Calu3 (cell line): ENCODE measurements at regions of chr12 and their contacts with region 1.

Region 1: GRCh38 chr12:9039397-9039977 is 50.1 kb downstream of the KLRG1 start:
- DNase-seq: peak; percentile 13
- H3K4me3 Mint-ChIP-seq: no peak overlapping the region
- H3K27ac Mint-ChIP-seq: no peak overlapping the region
- H3K4me1 Mint-ChIP-seq: no peaks in the 10 kb centered on the region
- H3K27me3 Mint-ChIP-seq: peaks cover 33% of the 10 kb centered on the region
- CTCF ChIP-seq: peak; percentile 25

Region 2: GRCh38 chr12:8949342-8950220 is 89.9 kb before region 1 on chr12 and contains the start of gene M6PR:
- CTCF ChIA-PET with region 1: interaction called, 7 read pairs
- intact Hi-C with region 1: loop called (anchors 5 kb)
- DNase-seq: peak; percentile 93
- H3K4me3 Mint-ChIP-seq: peak within 1 kb of the TSS; percentile 87
- H3K27ac Mint-ChIP-seq: peak within 1 kb of the TSS; percentile 87
- H3K4me1 Mint-ChIP-seq: peaks cover 20% of the 10 kb centered on the region
- H3K27me3 Mint-ChIP-seq: no peaks in the 10 kb centered on the region
- CTCF ChIP-seq: peak; percentile 11
- total RNA-seq, gene M6PR: 241 and 256 TPM in 2 replicates

Region 3: GRCh38 chr12:9001233-9001632 is 38.3 kb before region 1 on chr12:
- CTCF ChIA-PET with region 1: no interaction called
- intact Hi-C with region 1: no loop called
- DNase-seq: no peak
- H3K4me3 Mint-ChIP-seq: no peak overlapping the region
- H3K27ac Mint-ChIP-seq: no peak overlapping the region
- H3K4me1 Mint-ChIP-seq: no peaks in the 10 kb centered on the region
- H3K27me3 Mint-ChIP-seq: no peaks in the 10 kb centered on the region
- CTCF ChIP-seq: no peak

Region 4: GRCh38 chr12:9079883-9080675 is 40.6 kb after region 1 on chr12:
- CTCF ChIA-PET with region 1: no interaction called
- intact Hi-C with region 1: no loop called
- DNase-seq: no peak
- H3K4me3 Mint-ChIP-seq: no peak overlapping the region
- H3K27ac Mint-ChIP-seq: no peak overlapping the region
- H3K4me1 Mint-ChIP-seq: no peaks in the 10 kb centered on the region
- H3K27me3 Mint-ChIP-seq: peaks cover 7% of the 10 kb centered on the region
- CTCF ChIP-seq: no peak